A673 (cell line): ENCODE measurements at regions of chr9 and their contacts with region 1.

Region 1: GRCh38 chr9:35882263-35882848 is 12.2 kb upstream of the OR13J1 start:
- DNase-seq: peak; percentile 71
- H3K4me3 ChIP-seq: no peak overlapping the region
- H3K27ac ChIP-seq: no peak overlapping the region
- H3K4me1 ChIP-seq: no peaks in the 10 kb centered on the region
- H3K27me3 ChIP-seq: no peaks in the 10 kb centered on the region
- CTCF ChIP-seq: peak; percentile 99

Region 2: DNA sequence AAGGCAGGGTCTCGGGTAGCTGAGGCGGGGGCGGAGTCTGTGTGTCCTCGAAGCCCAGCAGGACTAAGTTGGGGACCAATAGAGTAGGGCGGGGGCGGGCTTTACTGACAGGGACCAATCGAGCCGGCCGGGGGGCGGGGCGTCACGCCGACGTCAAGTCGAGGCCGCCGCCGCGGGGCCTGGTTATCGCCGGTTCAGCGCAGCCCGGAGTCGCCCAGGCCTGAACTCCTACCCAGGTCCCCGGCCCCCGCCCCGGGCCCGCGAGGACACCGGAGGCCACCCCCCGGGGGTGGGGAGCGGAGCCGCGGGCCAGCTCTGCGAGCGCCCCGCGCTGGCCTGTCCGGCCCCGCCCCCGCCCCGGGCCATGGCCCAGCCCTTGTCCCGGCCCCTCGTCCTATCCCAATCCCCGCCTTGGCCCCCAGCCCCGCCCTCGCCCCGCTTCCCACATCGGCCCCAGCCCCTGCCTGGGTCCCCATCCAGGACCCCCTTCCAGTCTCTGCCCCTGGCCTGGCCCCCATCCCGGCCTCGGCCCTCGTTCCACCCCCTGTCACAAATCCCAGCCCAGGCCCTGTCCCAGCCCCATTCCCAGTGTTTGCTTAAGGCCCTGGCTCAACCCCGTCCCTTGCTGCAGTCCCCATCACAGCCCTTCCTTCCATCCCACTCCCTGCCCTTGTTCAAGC is 53.1 kb before region 1 on chr9 and contains the start of gene TMEM8B:
- CTCF ChIA-PET with region 1: interaction called, 18 read pairs
- POLR2A ChIA-PET with region 1: no interaction called
- intact Hi-C with region 1: loop called (anchors 5 kb)
- DNase-seq: peak; percentile 96
- H3K4me3 ChIP-seq: peak within 1 kb of the TSS; percentile 61
- H3K27ac ChIP-seq: peak within 1 kb of the TSS; percentile 63
- H3K4me1 ChIP-seq: peaks cover 9% of the 10 kb centered on the region
- H3K27me3 ChIP-seq: no peaks in the 10 kb centered on the region
- CTCF ChIP-seq: no peak
- total RNA-seq, gene TMEM8B: 6.9 and 10.9 TPM in 2 replicates

Region 3: DNA sequence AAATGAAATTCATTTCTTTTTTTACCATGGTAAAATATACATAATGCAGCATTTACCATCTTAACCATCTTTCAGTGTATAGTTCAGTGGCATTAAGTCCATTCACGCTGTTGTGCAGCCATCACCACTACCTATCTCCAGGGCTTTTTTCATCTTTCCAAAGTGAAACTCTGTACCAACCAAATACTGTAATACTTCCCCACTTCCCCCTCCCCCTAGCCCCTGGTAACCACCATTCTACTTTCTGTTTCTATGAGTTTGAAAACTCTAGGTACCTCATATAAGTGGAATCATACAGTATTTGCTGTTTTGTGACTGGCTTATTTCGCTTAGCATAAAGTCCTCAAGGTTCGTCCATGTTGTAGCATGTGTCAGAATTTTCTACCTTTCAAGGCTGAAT is 50.4 kb after region 1 on chr9:
- CTCF ChIA-PET with region 1: interaction called, 16 read pairs
- POLR2A ChIA-PET with region 1: no interaction called
- intact Hi-C with region 1: no loop called
- DNase-seq: no peak
- H3K4me3 ChIP-seq: no peak overlapping the region
- H3K27ac ChIP-seq: no peak overlapping the region
- H3K4me1 ChIP-seq: no peaks in the 10 kb centered on the region
- H3K27me3 ChIP-seq: no peaks in the 10 kb centered on the region
- CTCF ChIP-seq: no peak